Naive thymus-derived CD4-positive, alpha-beta T cell (primary cell): ENCODE measurements at regions of chr5 and their contacts with region 1.

Region 1: DNA sequence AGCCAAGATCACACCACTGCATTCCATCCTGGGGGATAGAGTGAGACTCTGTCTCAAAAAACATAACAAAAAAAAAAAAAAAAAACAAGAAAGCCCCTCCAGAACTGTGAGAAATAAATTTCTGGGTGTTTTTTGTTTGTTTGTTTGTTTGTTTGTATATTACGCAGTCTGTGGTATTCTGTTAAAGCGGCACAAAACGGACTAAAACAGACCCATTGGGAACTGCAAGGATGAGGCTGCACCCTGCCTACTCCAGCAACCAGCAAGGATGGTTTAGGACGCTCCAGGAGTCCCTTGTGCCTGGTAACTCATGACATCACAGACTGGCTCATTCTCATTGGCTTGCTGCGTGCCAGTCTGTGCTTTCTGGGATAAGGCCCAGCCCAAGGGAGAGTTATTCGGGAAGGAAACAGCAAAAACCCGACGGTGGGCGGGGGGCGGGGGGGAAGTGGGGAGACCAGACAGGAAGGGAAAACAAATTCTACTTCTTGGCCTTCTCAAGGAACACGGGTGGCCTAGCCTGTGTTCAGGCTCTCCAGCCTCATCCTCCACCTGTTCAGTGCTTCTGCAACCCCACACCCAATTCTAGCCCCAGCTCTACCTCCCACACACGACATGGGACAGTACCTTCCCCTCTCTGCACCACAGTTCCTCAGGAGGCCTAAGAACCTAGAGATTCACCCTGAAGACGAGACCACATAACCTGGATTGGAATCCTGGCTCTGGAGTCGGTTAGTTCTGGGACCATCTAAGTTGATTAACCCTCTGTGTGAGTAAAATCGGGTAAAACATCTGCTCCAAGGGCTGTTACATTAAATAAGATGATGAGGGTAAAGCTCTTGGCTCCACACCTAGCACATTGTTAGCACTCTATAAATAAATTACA is 2.8 kb downstream of the CD74 start:
- DNase-seq: peak in 7 of 9 donors; percentile 27 to 48 (median 43)
- ATAC-seq: no peak
- H3K4me3 ChIP-seq: peak overlapping the region; percentile 83
- H3K4me3 Mint-ChIP-seq: peak overlapping the region; percentile 91 to 100 (median 98)
- H3K27ac ChIP-seq: peak overlapping the region; percentile 98
- H3K27ac Mint-ChIP-seq: peak overlapping the region; percentile 96 to 100 (median 100)
- H3K4me1 ChIP-seq: peaks cover 32 to 35% of the 10 kb centered on the region in 2 donors
- H3K4me1 Mint-ChIP-seq: peaks cover 24 to 52% (median 38%) of the 10 kb centered on the region in 7 donors
- H3K27me3 ChIP-seq: no peaks in the 10 kb centered on the region
- H3K27me3 Mint-ChIP-seq: no peaks in the 10 kb centered on the region

Region 2: DNA sequence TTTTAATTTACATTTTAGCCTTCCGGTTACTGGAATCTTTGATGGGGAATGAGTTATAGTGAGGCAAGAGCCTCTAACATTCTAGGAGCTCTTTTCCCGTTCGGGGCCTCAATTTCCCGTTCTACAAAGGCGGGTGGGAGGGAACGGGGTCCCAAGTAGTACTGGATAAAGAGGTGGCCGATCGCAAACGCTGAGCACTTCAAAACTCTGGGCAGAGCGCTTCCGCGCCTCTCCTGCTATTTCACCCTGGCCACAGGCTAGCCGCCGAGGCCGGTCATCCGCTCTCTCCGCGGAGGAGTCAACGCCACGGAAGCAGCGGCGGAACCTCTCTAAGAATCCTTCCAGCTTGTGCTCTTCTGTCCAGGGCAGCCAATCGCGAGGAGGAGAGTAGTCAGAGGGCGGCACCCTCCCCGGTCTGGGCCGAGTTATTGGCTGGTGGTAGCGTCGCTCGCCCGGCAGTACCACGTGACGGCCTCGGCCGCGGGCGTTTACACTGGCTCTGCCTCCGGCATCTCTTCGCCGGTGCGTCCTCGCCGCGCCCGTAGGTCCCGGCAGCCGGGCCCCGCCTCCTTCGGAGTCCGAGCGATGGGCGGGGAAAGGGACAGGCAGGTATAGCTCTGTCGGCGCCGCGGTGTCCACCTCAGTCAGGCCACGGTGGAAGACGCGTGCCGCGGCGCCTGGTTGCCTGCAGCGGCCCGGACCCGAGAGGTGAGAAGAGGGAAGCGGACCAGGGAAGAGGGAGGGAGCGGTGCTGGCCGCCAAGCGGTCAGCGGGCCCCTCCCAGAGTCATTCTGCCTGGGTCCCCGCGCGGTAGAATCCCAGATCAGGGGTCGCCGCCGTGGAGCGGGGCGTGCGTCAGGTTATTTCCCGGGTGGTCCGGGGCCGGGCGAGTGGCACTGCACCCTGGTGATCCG is 449.4 kb before region 1 on chr5 and contains the start of gene SLC26A2:
- CTCF ChIA-PET with region 1: no interaction called
- POLR2A ChIA-PET with region 1: no interaction called
- intact Hi-C with region 1: loop called in 1 of 2 experiments (anchors 5 kb)
- DNase-seq: peak; percentile 78 to 92 (median 91)
- ATAC-seq: peak; percentile 99
- H3K4me3 ChIP-seq: peak within 1 kb of the TSS; percentile 98
- H3K4me3 Mint-ChIP-seq: peak within 1 kb of the TSS; percentile 90 to 100 (median 96)
- H3K27ac ChIP-seq: peak within 1 kb of the TSS; percentile 77
- H3K27ac Mint-ChIP-seq: peak within 1 kb of the TSS; percentile 94 to 98 (median 97)
- H3K4me1 ChIP-seq: peaks cover 16 to 28% of the 10 kb centered on the region in 2 donors
- H3K4me1 Mint-ChIP-seq: peaks cover 14 to 43% (median 37%) of the 10 kb centered on the region in 7 donors
- H3K27me3 ChIP-seq: no peaks in the 10 kb centered on the region
- H3K27me3 Mint-ChIP-seq: no peaks in the 10 kb centered on the region
- total RNA-seq, gene SLC26A2: 5.2 to 16.5 (median 9.6) TPM

Region 3: GRCh38 chr5:150398722-150399523 is 11.0 kb before region 1 on chr5:
- CTCF ChIA-PET with region 1: interaction called, 3 read pairs
- POLR2A ChIA-PET with region 1: interaction called, 5 read pairs
- intact Hi-C with region 1: loop called in 1 of 2 experiments (anchors 1 kb)
- DNase-seq: no peak
- ATAC-seq: peak; percentile 36
- H3K4me3 ChIP-seq: no peak overlapping the region
- H3K4me3 Mint-ChIP-seq: no peak overlapping the region
- H3K27ac ChIP-seq: no peak overlapping the region
- H3K27ac Mint-ChIP-seq: peak overlapping the region in 4 of 9 donors; percentile 6 to 83 (median 20)
- H3K4me1 ChIP-seq: peaks cover 0 to 3% of the 10 kb centered on the region in 2 donors
- H3K4me1 Mint-ChIP-seq: peaks cover 0 to 6% (median 5%) of the 10 kb centered on the region in 7 donors
- H3K27me3 ChIP-seq: no peaks in the 10 kb centered on the region
- H3K27me3 Mint-ChIP-seq: no peaks in the 10 kb centered on the region

Region 4: DNA sequence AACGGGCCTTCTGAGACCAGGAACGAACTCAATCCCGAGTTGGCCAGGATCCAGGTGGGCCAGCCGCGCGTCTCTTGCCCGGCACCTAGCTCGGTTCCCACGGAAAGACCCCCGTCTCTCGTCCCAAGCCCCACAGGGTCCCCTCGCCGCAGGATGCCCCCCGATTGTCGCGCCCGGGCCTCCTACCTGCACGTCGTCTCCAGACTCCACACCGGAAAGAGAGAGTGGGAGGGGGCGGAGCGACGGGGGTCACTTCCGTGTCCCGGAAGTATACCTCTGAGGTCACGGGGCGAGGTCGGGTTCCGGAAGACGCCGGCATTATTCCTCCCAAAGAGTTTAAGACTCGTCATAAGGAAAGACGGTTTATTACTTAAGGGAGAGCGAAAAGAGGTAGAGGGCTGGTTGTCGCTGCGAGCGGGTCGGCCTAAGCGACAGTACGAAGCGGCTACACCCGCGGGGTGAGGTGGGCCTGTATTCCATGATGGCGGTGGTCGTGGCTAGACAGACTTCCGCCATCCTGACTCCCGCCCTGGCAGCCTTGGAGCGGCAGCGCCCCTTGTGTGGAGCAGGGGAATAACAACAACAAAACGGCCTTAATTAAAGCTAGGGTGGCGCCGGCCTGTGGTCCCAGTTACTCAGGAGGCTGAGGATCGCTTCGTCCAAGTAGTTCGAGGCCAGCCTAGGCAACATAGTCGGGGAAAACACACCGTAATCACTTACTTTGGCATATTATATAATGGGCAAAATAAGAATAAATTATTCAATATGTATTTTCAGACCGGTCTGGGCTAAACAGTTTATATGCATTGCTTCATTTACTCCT is 39.8 kb after region 1 on chr5 and contains the start of gene RPS14:
- CTCF ChIA-PET with region 1: interaction called, 4 read pairs
- POLR2A ChIA-PET with region 1: interaction called, 29 read pairs
- intact Hi-C with region 1: loop called (anchors 1 kb)
- DNase-seq: peak; percentile 89 to 98 (median 97)
- ATAC-seq: peak; percentile 97
- H3K4me3 ChIP-seq: peak within 1 kb of the TSS; percentile 68
- H3K4me3 Mint-ChIP-seq: peak within 1 kb of the TSS; percentile 89 to 100 (median 96)
- H3K27ac ChIP-seq: peak within 1 kb of the TSS; percentile 100
- H3K27ac Mint-ChIP-seq: peak within 1 kb of the TSS; percentile 97 to 100 (median 100)
- H3K4me1 ChIP-seq: peaks cover 18 to 23% of the 10 kb centered on the region in 2 donors
- H3K4me1 Mint-ChIP-seq: peaks cover 21 to 44% (median 37%) of the 10 kb centered on the region in 7 donors
- H3K27me3 ChIP-seq: no peaks in the 10 kb centered on the region
- H3K27me3 Mint-ChIP-seq: no peaks in the 10 kb centered on the region
- total RNA-seq, gene RPS14: 2,331 to 7,378 (median 6,414) TPM

Region 5: GRCh38 chr5:151080623-151081430 is 670.9 kb after region 1 on chr5 and contains the start of gene TNIP1:
- CTCF ChIA-PET with region 1: no interaction called
- POLR2A ChIA-PET with region 1: no interaction called
- intact Hi-C with region 1: loop called in 1 of 2 experiments (anchors 1 kb)
- DNase-seq: peak; percentile 86 to 99 (median 90)
- ATAC-seq: peak; percentile 94
- H3K4me3 ChIP-seq: peak within 1 kb of the TSS; percentile 86
- H3K4me3 Mint-ChIP-seq: peak within 1 kb of the TSS; percentile 85 to 95 (median 90)
- H3K27ac ChIP-seq: peak within 1 kb of the TSS; percentile 96
- H3K27ac Mint-ChIP-seq: peak within 1 kb of the TSS; percentile 86 to 95 (median 91)
- H3K4me1 ChIP-seq: peaks cover 37 to 69% of the 10 kb centered on the region in 2 donors
- H3K4me1 Mint-ChIP-seq: peaks cover 53 to 84% (median 73%) of the 10 kb centered on the region in 7 donors
- H3K27me3 ChIP-seq: no peaks in the 10 kb centered on the region
- H3K27me3 Mint-ChIP-seq: no peaks in the 10 kb centered on the region
- total RNA-seq, gene TNIP1: 124 to 234 (median 131) TPM

Region 6: GRCh38 chr5:151213800-151214613 is 804.1 kb after region 1 on chr5:
- CTCF ChIA-PET with region 1: no interaction called
- POLR2A ChIA-PET with region 1: no interaction called
- intact Hi-C with region 1: loop called in 1 of 2 experiments (anchors 2 kb)
- DNase-seq: peak; percentile 53 to 85 (median 79)
- ATAC-seq: peak; percentile 90
- H3K4me3 ChIP-seq: peak overlapping the region; percentile 74
- H3K4me3 Mint-ChIP-seq: peak overlapping the region; percentile 80 to 93 (median 89)
- H3K27ac ChIP-seq: peak overlapping the region; percentile 93
- H3K27ac Mint-ChIP-seq: peak overlapping the region; percentile 90 to 98 (median 97)
- H3K4me1 ChIP-seq: peaks cover 80 to 82% of the 10 kb centered on the region in 2 donors
- H3K4me1 Mint-ChIP-seq: peaks cover 56 to 95% (median 84%) of the 10 kb centered on the region in 7 donors
- H3K27me3 ChIP-seq: no peaks in the 10 kb centered on the region
- H3K27me3 Mint-ChIP-seq: no peaks in the 10 kb centered on the region